ENCODE measurements at regions of chr13 and their contacts with region 1.

Region 1: GRCh38 chr13:28805193-28805819 is 14.8 kb upstream of the MTUS2 start:
- DNase-seq: no peak
- ATAC-seq: peak; percentile 88
- H3K4me3 ChIP-seq: no peak overlapping the region
- H3K27ac ChIP-seq: no peak overlapping the region
- H3K4me1 ChIP-seq: no peaks in the 10 kb centered on the region
- H3K27me3 ChIP-seq: no peaks in the 10 kb centered on the region
- CTCF ChIP-seq: peak; percentile 35 to 83 (median 66); a peak in 5 of 6 replicates
- POLR2A ChIP-seq: no peak
- RAD21 ChIP-seq: peak; percentile 37

Region 2: DNA sequence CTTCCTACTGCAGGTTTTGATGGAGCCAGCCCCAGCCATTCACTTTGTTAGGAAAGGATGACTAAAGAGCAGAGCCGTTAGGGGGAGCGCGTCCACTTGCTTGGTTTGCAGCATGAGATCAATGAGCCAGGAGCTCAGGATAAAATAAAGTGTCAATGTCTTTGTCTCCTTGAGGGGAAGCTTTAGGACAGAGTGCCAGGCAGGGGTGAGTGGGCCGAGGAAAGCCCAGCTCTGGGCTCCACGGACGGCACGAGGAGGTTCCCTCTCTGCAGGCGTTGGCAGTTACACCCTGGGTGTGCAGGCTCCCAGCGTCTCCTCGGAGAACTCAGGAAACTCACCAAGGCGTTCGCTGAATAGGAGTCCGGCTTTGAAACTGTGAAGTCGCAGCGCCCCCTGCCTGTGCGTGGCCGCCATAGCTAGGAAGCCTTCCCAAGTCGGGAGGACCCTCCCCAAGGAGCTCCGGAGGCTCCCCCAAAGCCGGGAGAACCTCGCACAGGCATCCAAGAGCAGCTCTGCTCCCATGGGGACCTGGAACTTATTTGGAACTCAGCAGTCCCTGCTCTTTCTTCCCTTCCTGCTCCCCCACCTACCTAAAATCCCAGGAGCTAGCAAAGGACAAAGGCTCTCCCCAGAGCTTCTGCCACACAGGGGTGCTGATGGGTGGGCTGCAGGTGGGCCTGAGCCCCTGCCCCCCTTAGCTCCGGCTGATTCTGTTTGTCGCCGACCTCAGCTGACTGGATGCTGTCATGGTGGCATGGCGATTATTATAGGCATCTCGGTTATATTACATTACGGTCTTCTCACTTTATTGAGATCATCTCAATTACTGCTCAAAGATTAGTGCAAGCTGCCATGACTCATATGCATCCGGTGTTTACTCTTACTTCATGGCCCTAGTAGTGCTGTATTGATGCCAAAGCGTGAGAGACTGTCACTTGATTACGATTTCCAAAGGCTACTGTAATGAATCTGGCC is 978.6 kb before region 1 on chr13:
- CTCF ChIA-PET with region 1: no interaction called
- POLR2A ChIA-PET with region 1: no interaction called
- RAD21 ChIA-PET with region 1: no interaction called
- intact Hi-C with region 1: no loop called
- DNase-seq: peak; percentile 84
- ATAC-seq: peak; percentile 86
- H3K4me3 ChIP-seq: peak overlapping the region; percentile 35 to 54
- H3K27ac ChIP-seq: 0 out of 2 replicates have a peak overlapping the region, but pooled peaks have one; percentile 27
- H3K4me1 ChIP-seq: peaks cover 4 to 20% of the 10 kb centered on the region in 2 experiments; a peak in 3 of 4 replicates
- H3K27me3 ChIP-seq: peaks cover 15% of the 10 kb centered on the region
- CTCF ChIP-seq: peak; percentile 93 to 96 (median 94)
- POLR2A ChIP-seq: no peak
- RAD21 ChIP-seq: peak; percentile 89

Region 3: GRCh38 chr13:28574617-28575142 is 230.6 kb before region 1 on chr13:
- CTCF ChIA-PET with region 1: no interaction called
- POLR2A ChIA-PET with region 1: no interaction called
- RAD21 ChIA-PET with region 1: no interaction called
- intact Hi-C with region 1: no loop called
- DNase-seq: peak; percentile 95
- ATAC-seq: peak; percentile 94
- H3K4me3 ChIP-seq: peak overlapping the region in 1 of 2 experiments; percentile 9; a peak in 1 of 4 replicates
- H3K27ac ChIP-seq: peak overlapping the region; percentile 22; the same call in 1 of the 2 replicates
- H3K4me1 ChIP-seq: peaks cover 7 to 21% of the 10 kb centered on the region in 2 experiments
- H3K27me3 ChIP-seq: no peaks in the 10 kb centered on the region
- CTCF ChIP-seq: no peak
- POLR2A ChIP-seq: no peak
- RAD21 ChIP-seq: no peak

Region 4: DNA sequence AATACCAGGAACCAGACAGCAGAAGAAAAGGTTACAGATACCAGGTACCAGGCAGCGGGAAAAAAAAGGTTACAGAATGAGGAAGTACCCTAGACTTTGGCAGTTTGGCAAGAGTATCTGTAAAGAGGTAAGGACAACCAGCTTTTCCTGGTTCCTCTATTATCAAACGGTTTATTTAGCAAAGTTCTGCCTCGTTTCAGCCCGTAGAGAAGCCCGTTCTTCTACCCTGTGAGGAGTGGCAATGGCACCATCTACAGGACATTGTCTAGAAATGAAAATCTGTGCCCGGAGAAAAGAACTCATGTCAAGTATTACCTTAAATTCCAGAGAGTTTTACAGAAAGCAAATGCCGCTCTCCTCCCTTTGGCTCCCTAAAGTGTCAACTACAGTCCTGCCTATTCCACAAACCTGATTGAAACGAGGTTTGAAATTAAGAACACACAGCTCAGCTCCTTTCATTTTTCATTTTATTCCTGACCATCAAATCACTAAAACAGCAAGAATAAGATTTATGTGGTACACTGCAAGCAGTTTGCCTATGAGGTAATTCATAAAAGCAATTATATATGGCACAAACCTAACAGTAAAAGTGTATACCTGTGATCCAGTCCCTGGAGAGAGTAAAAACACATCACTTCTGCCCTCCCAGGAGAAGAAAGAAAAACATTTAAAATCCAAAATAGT is 563.9 kb after region 1 on chr13:
- CTCF ChIA-PET with region 1: no interaction called
- POLR2A ChIA-PET with region 1: no interaction called
- RAD21 ChIA-PET with region 1: no interaction called
- intact Hi-C with region 1: loop called (anchors 2 kb)
- DNase-seq: peak; percentile 27
- ATAC-seq: peak; percentile 87
- H3K4me3 ChIP-seq: no peak overlapping the region
- H3K27ac ChIP-seq: no peak overlapping the region
- H3K4me1 ChIP-seq: no peaks in the 10 kb centered on the region
- H3K27me3 ChIP-seq: peaks cover 11% of the 10 kb centered on the region; the same call in 1 of the 2 replicates
- CTCF ChIP-seq: peak; percentile 35 to 64 (median 60); a peak in 5 of 6 replicates
- POLR2A ChIP-seq: no peak
- RAD21 ChIP-seq: peak; percentile 65

Measured in HCT116 (cell line).